Heart left ventricle (tissue), 16 donors: ENCODE measurements at regions of chr5 and their contacts with region 1.

Region 1: GRCh38 chr5:142946547-142947426 is 176.6 kb downstream of the ARHGAP26 start:
- DNase-seq: no peak
- ATAC-seq: peak in 3 of 4 donors; percentile 39 to 69 (median 44)
- H3K4me3 ChIP-seq: no peak overlapping the region
- H3K27ac ChIP-seq: peak overlapping the region in 1 of 12 donors; percentile 36
- H3K4me1 ChIP-seq: peaks cover 0 to 57% (median 17%) of the 10 kb centered on the region in 12 donors
- H3K27me3 ChIP-seq: no peaks in the 10 kb centered on the region
- CTCF ChIP-seq: no peak
- POLR2A ChIP-seq: no peak

Region 2: DNA sequence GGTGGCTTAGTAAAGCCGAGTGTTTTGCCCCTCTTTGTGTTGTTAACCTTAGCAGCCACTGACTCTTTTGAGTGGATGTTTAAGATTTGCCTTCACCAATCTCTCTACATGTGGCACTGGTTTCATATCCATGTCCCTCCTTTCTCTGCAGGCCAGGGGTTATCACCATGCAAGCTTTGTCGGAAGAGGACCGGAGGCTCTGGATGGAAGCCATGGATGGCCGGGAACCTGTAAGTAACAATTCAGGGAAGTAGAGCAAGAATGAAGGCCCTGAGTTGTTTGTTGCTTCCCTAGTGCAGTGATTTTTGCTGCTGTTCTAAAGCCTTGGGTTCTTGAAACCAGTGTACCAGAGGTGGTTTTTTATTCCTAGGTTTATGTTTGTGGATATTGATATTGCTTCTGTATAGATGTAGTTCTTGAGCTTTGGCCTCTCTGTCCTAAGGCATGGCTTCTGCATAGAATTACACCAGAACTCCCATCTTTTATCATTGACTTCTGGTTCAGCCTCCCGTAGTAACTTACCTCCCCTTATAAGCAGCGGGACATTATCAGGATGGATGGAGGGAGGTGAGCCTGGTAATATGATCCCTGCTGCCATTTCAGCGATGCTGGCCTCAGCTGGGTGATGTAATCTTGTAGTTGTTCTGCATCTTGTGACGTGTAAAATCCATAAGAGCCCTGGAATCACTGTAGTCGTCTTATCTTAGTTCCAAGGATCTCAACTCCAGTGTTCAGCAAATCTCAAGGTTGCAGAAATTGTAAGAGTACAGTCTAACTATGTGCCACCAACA is 14.7 kb before region 1 on chr5:
- intact Hi-C with region 1: loop called in 1 of 10 experiments (anchors 2 kb)
- DNase-seq: peak in 4 of 5 donors; percentile 35 to 58 (median 44)
- ATAC-seq: no peak
- H3K4me3 ChIP-seq: no peak overlapping the region
- H3K27ac ChIP-seq: peak overlapping the region in 11 of 12 donors; percentile 16 to 87 (median 60)
- H3K4me1 ChIP-seq: peaks cover 4 to 90% (median 66%) of the 10 kb centered on the region in 12 donors
- H3K27me3 ChIP-seq: no peaks in the 10 kb centered on the region
- CTCF ChIP-seq: no peak
- POLR2A ChIP-seq: no peak